WTC11 (cell line): ENCODE measurements at regions of chr12 and their contacts with region 1.

Region 1: DNA sequence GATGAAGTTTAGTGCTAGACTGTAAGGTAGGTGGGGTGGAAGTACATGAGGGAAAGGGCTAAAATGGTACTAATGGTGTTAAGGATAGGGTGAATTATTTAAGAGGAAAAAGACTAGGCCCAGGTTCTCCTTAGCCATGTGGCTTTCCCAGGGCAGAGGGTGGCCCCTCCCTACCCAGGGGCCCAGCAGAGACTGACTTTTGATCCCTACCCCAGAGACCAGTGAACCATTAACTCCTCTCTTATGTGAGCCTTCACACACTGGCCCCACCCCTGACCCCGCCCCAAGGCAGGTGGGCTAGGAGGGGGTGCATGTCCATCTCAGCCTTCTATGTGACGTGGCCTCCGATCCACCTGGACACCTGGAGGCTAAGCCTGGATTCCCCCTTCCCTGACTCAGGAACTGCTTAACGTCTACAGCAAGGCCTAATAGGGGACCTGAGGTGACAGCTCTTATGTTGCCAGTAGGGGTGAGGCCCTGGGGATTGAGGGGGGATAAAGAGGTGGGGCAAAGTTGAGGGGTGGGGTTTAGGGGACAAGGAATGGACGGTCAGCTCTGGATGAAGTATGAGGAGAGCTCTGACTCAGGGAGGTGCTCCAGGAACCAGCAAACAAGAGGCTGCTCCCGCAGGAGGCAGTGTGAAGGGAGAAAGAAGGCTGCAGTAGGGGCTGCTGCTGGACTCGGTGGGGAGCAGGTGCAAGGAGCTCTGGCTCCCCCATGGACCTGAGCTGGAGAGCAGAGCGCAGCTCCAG is 757 bp downstream of the SLC39A5 start:
- DNase-seq: peak; percentile 24
- ATAC-seq: peak; percentile 38
- H3K4me3 Mint-ChIP-seq: no peak overlapping the region
- H3K27ac Mint-ChIP-seq: no peak overlapping the region
- H3K4me1 Mint-ChIP-seq: peaks cover 6% of the 10 kb centered on the region; the same call in 1 of the 2 replicates
- H3K27me3 Mint-ChIP-seq: peaks cover 28% of the 10 kb centered on the region
- CTCF ChIP-seq: no peak

Region 2: GRCh38 chr12:56258057-56258819 is 27.6 kb after region 1 on chr12 and contains the start of gene ANKRD52:
- CTCF ChIA-PET with region 1: interaction called, 14 read pairs
- POLR2A ChIA-PET with region 1: no interaction called
- DNase-seq: peak; percentile 76
- ATAC-seq: peak; percentile 74
- H3K4me3 Mint-ChIP-seq: peak within 1 kb of the TSS; percentile 95
- H3K27ac Mint-ChIP-seq: peak within 1 kb of the TSS; percentile 92
- H3K4me1 Mint-ChIP-seq: peaks cover 18% of the 10 kb centered on the region
- H3K27me3 Mint-ChIP-seq: 0 out of 2 replicates have a peak, but pooled peaks cover 4% of the 10 kb centered on the region
- CTCF ChIP-seq: peak; percentile 61
- total RNA-seq, gene ANKRD52: 33.0 to 41.2 TPM (median 38.6 TPM) in 3 replicates

Region 3: GRCh38 chr12:56307221-56307965 is 76.8 kb after region 1 on chr12:
- CTCF ChIA-PET with region 1: no interaction called
- POLR2A ChIA-PET with region 1: no interaction called
- DNase-seq: no peak
- ATAC-seq: no peak
- H3K4me3 Mint-ChIP-seq: no peak overlapping the region
- H3K27ac Mint-ChIP-seq: no peak overlapping the region
- H3K4me1 Mint-ChIP-seq: no peaks in the 10 kb centered on the region
- H3K27me3 Mint-ChIP-seq: no peaks in the 10 kb centered on the region
- CTCF ChIP-seq: no peak

Region 4: DNA sequence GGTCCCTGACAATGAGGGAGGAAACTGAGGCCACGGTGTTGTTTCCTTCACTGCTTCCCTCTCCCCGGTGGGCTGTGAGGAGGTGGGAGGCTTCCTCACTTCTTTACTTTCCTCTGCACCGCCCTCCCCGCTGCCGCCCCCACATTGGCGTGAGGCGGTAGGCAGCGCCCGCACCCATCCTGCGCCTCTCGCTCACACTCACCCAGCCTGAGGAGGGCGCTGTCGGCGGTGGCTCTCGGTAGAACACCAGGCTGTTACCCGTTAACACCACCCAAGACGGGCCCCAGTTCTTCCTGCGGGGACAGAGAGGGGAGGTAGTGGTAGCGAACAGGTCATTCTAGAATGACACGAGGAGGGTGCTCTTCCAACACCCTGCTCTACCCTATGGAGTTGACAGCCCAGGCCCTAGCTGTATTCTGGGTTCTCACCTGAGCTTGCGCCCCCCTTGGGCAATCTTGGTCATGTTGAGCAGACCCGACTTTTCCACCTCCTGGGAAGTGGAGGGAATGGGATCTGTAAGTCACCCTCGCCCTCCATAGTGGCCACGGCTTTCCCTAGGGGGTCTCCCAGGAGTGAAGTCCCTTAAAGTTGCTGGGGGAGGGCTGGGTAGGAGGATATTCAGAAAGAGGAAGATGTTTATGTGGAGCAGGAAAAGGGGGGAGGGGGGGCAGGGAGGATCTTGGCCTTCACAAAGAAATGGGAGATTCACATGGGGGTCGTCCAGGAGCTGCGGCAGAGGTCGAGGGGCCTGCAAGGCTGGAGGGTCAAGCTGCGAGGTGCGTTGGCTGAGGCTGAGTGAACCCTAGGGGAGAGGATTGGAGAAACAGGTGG is 1245.8 kb after region 1 on chr12:
- CTCF ChIA-PET with region 1: no interaction called
- POLR2A ChIA-PET with region 1: no interaction called
- DNase-seq: peak; percentile 68
- ATAC-seq: peak; percentile 44
- H3K4me3 Mint-ChIP-seq: peak overlapping the region; percentile 77
- H3K27ac Mint-ChIP-seq: no peak overlapping the region
- H3K4me1 Mint-ChIP-seq: peaks cover 35% of the 10 kb centered on the region
- H3K27me3 Mint-ChIP-seq: peaks cover 99% of the 10 kb centered on the region
- CTCF ChIP-seq: peak; percentile 63